Panc1 (cell line): ENCODE measurements at regions of chr15 and their contacts with region 1.

Region 1: DNA sequence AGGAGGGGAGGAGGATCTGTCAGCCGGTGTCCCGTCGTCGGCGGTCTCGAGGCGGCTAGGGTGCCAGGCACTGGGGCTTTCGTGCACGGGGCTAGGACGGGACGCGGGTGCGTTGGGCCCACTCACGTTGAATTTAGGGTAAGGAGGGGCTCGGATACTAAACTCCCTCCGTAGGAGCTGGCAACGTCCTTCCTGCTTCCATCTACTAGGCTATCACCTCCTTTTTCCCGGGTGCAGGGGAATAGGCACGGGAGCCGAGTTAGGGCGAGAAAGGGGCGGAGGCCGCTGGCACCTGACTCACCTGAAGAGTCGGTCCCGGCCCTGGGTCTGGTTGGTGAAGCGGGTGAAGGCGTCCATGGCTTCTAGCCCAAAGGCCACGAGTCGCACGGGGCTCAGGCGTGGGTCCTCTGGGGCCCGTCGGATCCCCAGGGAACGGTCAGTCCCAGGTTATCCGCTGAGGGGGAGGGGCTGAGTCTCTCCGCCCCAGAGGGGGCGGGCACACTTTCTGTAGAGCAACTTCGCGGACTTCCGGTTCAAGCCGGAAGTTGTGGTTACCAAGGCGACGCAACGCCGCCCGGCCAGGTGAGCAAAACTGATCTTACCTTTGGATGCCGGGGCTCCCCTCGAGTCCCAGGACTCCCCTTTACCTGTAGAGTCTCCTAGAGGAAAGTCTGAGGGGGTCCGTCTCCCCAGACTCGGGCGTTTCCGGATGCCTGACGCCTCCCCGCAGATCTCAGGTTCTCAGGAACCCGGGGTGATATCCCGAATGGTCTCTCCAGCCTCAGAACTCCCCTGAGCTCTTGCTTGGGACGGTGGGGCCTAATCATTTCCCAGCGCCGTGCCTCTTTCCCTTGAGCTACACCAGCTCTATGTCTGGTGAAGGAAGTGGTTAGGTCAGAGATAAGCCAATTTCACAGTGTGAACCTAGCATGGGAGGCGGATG is at the starts of genes PEX11A and WDR93:
- DNase-seq: peak; percentile 39
- ATAC-seq: peak; percentile 99
- H3K4me3 ChIP-seq: peak within 1 kb of the TSS; percentile 72 to 89
- H3K27ac ChIP-seq: peak within 1 kb of the TSS; percentile 79
- H3K4me1 ChIP-seq: peaks cover 8% of the 10 kb centered on the region; the same call in 1 of the 2 replicates
- H3K27me3 ChIP-seq: no peaks in the 10 kb centered on the region
- CTCF ChIP-seq: no peak
- total RNA-seq, gene PEX11A: 6.2 TPM
- total RNA-seq, gene WDR93: 0.18 TPM

Region 2: DNA sequence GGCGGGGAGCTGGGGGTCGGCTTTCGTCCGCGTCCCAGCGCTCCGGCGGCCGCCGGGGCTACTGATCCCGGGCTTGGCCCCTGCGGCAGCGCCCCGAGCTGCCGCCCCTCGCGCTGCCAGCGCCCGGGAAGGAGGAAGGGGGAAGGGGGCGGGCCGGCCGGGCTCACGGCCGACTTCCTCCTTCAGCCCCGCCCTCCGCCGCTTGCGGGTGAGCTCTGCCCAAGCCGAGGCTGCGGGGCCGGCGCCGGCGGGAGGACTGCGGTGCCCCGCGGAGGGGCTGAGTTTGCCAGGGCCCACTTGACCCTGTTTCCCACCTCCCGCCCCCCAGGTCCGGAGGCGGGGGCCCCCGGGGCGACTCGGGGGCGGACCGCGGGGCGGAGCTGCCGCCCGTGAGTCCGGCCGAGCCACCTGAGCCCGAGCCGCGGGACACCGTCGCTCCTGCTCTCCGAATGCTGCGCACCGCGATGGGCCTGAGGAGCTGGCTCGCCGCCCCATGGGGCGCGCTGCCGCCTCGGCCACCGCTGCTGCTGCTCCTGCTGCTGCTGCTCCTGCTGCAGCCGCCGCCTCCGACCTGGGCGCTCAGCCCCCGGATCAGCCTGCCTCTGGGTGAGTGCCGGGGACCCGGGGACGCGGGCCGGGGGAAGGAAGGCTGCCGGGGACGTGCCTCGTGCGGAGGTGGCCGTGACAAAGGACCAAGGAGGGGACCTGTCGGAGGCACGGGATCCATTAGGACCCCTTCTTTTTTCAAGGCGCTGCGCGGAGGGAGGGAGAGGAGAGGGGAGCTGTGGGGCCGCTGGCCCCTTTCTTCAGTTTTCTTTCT is 510.8 kb after region 1 on chr15 and contains the start of gene SEMA4B:
- CTCF ChIA-PET with region 1: no interaction called
- POLR2A ChIA-PET with region 1: interaction called, 11 read pairs
- in situ Hi-C with region 1: no loop called
- intact Hi-C with region 1: no loop called
- DNase-seq: no peak
- ATAC-seq: peak; percentile 79
- H3K4me3 ChIP-seq: peak within 1 kb of the TSS; percentile 87 to 100
- H3K27ac ChIP-seq: peak within 1 kb of the TSS; percentile 100
- H3K4me1 ChIP-seq: peaks cover 47% of the 10 kb centered on the region
- H3K27me3 ChIP-seq: no peaks in the 10 kb centered on the region
- CTCF ChIP-seq: no peak
- total RNA-seq, gene SEMA4B: 600 TPM